SK-N-SH (cell line): ENCODE measurements at regions of chr6 and their contacts with region 1.

Region 1: GRCh38 chr6:39302669-39303424 is 11.4 kb downstream of the KCNK17 start:
- DNase-seq: peak; percentile 92
- H3K4me3 ChIP-seq: peak overlapping the region; percentile 14 to 30; a peak in 1 of 4 replicates
- H3K27ac ChIP-seq: no peak overlapping the region
- H3K4me1 ChIP-seq: peaks cover 0 to 2% of the 10 kb centered on the region in 2 experiments; a peak in 1 of 4 replicates
- H3K27me3 ChIP-seq: no peaks in the 10 kb centered on the region
- CTCF ChIP-seq: peak; percentile 76
- EP300 ChIP-seq: no peak
- RAD21 ChIP-seq: peak; percentile 92

Region 2: DNA sequence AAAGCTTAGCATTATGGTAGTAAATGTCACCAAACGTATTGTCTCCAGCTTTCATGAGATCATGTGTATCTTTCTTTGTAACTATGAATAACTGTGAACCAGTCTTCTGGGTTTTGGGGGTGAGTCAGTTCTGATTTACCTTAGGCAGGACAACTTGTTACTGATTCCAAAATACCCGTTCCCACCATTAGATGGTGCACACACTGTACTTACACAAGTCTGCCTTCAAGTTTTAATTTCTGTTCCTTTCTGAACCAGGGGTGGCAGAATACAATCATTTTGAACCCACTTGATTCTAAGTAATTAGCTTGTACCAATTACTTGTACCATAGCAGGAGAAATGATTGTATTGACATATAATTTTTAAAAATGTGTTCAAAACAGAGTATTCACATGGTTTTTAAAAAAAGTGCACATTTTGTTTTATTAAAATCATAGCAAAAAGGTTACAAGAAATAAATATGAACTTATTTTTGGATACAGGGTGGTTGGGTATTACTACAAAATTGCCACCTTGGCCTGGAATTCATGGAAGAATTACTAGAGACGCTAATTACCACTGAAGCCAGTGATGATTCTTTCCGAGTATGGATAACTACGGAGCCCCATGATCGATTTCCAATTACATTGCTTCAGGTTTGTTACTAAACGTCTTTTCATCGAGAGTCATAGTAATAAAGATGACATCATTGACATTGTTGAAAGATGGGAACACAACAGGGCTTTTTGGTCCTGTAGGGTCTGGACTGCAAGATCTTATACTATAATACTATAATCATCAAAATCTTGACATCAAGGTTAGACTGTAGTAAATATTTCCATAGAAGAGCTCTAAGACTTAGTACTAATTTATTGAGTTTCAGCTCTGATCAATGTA is 329.4 kb before region 1 on chr6:
- CTCF ChIA-PET with region 1: interaction called, 83 read pairs
- POLR2A ChIA-PET with region 1: no interaction called
- DNase-seq: peak; percentile 64
- H3K4me3 ChIP-seq: no peak overlapping the region
- H3K27ac ChIP-seq: no peak overlapping the region
- H3K4me1 ChIP-seq: peaks cover 0 to 16% of the 10 kb centered on the region in 2 experiments; a peak in 2 of 4 replicates
- H3K27me3 ChIP-seq: no peaks in the 10 kb centered on the region
- CTCF ChIP-seq: peak; percentile 62
- EP300 ChIP-seq: no peak
- RAD21 ChIP-seq: peak; percentile 81

Region 3: DNA sequence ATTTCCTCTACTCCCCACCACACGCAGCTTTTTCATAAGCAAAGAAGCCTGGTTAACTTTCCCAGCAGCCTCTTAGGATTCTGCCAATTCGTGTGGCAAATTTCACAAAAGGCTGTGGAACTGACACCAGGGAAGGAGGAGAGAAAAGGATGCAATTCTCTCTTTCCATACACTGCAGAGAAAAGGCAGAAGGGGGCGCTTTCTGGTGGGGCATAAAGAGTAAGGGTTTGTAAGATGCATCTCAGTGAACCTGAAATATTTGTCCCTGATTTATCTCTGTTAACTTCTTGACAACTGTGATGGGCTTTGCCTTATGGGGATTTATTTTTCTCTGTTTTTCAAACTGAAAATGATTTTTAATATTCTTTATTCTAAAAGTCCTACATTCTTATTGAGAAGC is 299.8 kb before region 1 on chr6:
- CTCF ChIA-PET with region 1: interaction called, 110 read pairs
- POLR2A ChIA-PET with region 1: no interaction called
- DNase-seq: no peak
- H3K4me3 ChIP-seq: no peak overlapping the region
- H3K27ac ChIP-seq: no peak overlapping the region
- H3K4me1 ChIP-seq: no peaks in the 10 kb centered on the region
- H3K27me3 ChIP-seq: no peaks in the 10 kb centered on the region
- CTCF ChIP-seq: peak; percentile 21
- EP300 ChIP-seq: no peak
- RAD21 ChIP-seq: peak; percentile 56

Region 4: DNA sequence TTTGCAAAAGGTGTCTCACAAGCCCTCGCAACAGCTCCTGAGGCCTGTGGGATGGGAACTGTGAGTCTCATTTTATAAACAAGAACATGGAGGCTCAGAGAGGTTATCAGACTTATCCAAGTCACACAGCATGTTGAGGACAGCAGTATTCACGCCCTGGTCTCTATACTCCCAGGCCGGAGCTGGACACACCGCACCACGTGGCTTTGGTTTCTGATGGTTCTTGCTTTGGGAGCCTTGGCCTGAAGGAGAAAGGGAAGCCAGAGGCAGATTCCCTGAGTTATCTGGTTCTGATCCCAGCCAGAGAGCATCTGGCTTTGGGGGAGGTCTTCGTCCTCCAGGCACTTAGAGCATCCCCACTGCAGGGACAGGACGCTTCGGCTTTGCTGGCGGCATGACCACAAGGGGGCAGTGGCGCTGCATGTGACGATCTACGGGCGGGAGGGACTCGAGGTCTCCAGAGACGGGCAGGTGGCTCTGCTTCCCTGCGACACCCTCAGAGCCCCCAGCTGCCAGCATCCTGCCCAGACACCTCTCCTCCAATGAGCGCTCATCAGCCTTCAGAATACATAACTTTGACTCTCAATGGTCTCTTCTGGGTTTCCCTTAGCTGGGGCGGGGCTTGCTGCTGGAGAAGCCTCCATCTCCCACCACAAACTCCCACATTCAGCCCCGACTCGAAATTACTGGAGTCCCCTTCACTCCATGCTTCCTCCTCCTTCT is 136.5 kb before region 1 on chr6:
- CTCF ChIA-PET with region 1: interaction called, 457 read pairs
- POLR2A ChIA-PET with region 1: no interaction called
- DNase-seq: peak; percentile 89
- H3K4me3 ChIP-seq: no peak overlapping the region; a peak in 1 of 4 replicates
- H3K27ac ChIP-seq: no peak overlapping the region
- H3K4me1 ChIP-seq: no peaks in the 10 kb centered on the region; a peak in 1 of 4 replicates
- H3K27me3 ChIP-seq: no peaks in the 10 kb centered on the region
- CTCF ChIP-seq: peak; percentile 70
- EP300 ChIP-seq: no peak
- RAD21 ChIP-seq: peak; percentile 92

Region 5: GRCh38 chr6:39189915-39190544 is 112.8 kb before region 1 on chr6:
- CTCF ChIA-PET with region 1: interaction called, 10 read pairs
- POLR2A ChIA-PET with region 1: no interaction called
- DNase-seq: peak; percentile 69
- H3K4me3 ChIP-seq: no peak overlapping the region
- H3K27ac ChIP-seq: no peak overlapping the region
- H3K4me1 ChIP-seq: peaks cover 0 to 6% of the 10 kb centered on the region in 2 experiments; a peak in 1 of 4 replicates
- H3K27me3 ChIP-seq: no peaks in the 10 kb centered on the region
- CTCF ChIP-seq: no peak; the same call in 1 of the 2 replicates
- EP300 ChIP-seq: no peak
- RAD21 ChIP-seq: peak; percentile 45

Region 6: DNA sequence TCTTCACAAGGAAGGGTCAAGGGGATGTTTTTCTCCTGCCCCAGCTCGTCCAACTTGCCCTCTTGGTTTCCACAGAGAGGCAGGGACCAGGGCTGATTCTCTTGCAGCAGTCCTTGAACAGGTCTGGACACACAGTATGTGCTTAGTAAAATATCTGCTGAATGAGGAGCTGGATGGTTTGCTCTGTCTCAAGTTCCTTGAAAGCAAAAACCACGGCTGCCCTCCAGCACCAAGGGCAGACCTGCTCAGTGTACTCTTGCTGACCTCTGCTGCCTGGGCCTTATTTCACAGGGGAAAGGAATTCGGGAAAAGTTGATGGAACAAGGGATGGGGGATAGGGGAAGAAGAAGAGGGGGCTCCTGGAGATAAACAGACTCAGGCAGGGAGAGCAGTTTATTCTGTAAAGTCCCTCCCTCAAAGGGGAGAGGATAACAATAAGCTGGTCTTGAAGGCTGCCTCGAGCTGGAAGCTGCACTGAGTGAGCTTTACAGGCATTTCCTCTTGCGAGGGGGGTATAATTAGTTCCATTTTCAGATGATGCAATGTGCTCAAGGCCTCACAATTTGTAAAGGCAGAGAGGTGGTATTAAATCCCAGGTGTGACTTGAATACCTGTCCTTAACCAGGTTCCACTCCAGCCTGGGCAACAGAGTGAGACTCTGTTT is 83.8 kb before region 1 on chr6:
- CTCF ChIA-PET with region 1: interaction called, 11 read pairs
- POLR2A ChIA-PET with region 1: no interaction called
- DNase-seq: no peak
- H3K4me3 ChIP-seq: no peak overlapping the region
- H3K27ac ChIP-seq: no peak overlapping the region
- H3K4me1 ChIP-seq: no peaks in the 10 kb centered on the region
- H3K27me3 ChIP-seq: no peaks in the 10 kb centered on the region
- CTCF ChIP-seq: no peak
- EP300 ChIP-seq: no peak
- RAD21 ChIP-seq: 0 out of 2 replicates have a peak, but pooled peaks have one; percentile 2

Region 7: DNA sequence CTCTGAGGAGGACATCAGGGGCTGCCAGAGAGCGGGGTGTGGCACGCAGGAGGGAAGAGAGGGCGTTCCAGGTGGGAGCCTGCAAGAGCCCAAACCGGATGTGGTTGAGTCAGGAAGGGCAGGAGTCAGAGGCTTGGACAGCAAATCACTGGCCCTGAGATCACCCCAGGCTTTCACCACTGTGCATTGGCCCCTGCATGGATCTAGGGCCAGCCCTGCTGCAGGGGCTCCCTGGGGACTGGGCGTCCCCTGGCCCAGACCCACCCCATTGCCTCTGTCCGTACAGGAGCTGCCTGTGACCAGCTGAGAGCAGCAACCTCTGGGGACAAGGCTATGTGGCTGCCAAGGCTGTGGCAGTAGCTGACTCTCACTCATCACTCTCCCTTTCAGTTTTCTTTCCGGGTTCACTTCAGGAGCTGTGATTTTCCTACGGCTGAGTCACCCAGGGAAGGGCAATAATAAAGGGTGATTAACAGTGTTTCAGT is 22.6 kb before region 1 on chr6:
- CTCF ChIA-PET with region 1: interaction called, 11 read pairs
- POLR2A ChIA-PET with region 1: no interaction called
- DNase-seq: no peak
- H3K4me3 ChIP-seq: no peak overlapping the region
- H3K27ac ChIP-seq: no peak overlapping the region
- H3K4me1 ChIP-seq: no peaks in the 10 kb centered on the region
- H3K27me3 ChIP-seq: no peaks in the 10 kb centered on the region
- CTCF ChIP-seq: no peak
- EP300 ChIP-seq: no peak
- RAD21 ChIP-seq: no peak

Region 8: GRCh38 chr6:39553860-39554802 is 251.3 kb after region 1 on chr6:
- CTCF ChIA-PET with region 1: no interaction called
- POLR2A ChIA-PET with region 1: no interaction called
- DNase-seq: no peak
- H3K4me3 ChIP-seq: no peak overlapping the region
- H3K27ac ChIP-seq: no peak overlapping the region
- H3K4me1 ChIP-seq: no peaks in the 10 kb centered on the region; a peak in 1 of 4 replicates
- H3K27me3 ChIP-seq: no peaks in the 10 kb centered on the region
- CTCF ChIP-seq: no peak
- EP300 ChIP-seq: no peak
- RAD21 ChIP-seq: no peak

Region 9: GRCh38 chr6:39664173-39664572 is 361.3 kb after region 1 on chr6:
- CTCF ChIA-PET with region 1: no interaction called
- POLR2A ChIA-PET with region 1: no interaction called
- DNase-seq: no peak
- H3K4me3 ChIP-seq: no peak overlapping the region
- H3K27ac ChIP-seq: no peak overlapping the region
- H3K4me1 ChIP-seq: no peaks in the 10 kb centered on the region
- H3K27me3 ChIP-seq: no peaks in the 10 kb centered on the region
- CTCF ChIP-seq: no peak
- EP300 ChIP-seq: no peak
- RAD21 ChIP-seq: no peak